ENCODE measurements at regions of chr17 and their contacts with region 1.

Region 1: GRCh38 chr17:9021158-9021991 is at the start of gene NTN1:
- DNase-seq: peak; percentile 73
- ATAC-seq: peak; percentile 76 to 83
- total RNA-seq, gene NTN1: 99.9 to 167 TPM

Region 2: DNA sequence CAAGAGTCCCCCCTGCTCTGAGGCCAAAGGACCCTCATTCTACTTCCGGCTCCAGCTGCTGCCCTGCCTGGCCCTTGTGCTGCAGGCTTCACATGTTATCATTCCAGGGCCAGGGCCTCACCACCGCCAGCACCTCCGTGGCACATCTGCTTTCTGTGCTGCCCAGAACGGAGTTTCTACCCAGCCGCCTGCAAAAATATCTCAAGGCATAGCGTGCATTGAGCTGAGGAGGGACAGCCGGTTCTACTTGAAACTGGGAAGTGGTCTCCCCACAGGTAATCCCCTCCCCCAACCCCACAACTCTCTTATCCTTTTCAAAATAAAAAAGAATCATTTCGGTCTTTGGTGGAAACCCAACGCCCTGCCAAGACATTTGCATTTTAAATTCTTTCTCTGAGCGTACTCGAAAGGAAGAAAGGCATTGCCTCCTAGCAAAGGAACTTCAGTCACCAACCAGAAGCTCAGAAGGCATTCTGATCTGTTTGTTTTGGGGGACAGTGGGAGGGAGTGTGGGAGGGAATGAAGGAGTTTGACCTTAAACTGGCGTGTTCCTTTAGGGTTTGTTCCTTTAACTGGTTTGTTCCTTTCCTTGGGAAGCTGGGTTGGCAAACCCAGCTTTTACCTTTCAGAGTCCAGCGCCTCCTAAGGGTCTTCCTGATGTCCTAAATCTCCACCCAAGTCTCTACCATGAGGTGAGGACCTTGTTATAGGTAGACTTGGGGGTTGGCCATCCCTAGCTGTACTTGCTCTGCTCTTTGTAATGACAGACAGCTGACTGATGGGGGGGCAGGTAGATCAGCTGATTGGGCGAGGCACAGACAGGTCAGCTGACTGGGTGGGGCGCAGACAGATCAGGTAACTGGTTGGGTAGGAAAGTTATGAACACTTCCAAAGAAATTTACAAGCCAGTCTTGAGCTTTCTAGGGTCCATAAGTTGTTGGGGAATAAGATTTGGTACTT is 120.5 kb before region 1 on chr17:
- intact Hi-C with region 1: no loop called
- DNase-seq: no peak
- ATAC-seq: no peak

Region 3: DNA sequence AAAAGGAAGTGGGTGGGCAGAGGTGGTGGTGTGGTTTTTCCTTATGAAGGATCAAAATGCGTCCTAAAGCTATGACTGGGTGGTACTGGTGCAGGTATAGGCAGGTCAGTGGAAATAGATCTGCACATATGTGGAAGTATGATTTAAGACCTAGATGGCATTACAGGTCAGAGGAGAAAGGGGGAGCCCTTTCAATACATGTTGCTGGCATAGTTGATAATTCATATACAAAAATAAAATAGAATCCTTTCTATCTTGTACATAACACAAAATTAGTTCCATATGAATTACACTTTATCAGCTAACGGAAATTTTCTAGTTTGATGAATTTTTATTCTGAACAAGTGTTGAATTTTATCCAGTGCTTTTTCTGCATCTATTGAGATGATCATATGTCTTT is 35.1 kb before region 1 on chr17:
- intact Hi-C with region 1: no loop called
- DNase-seq: no peak
- ATAC-seq: no peak

Region 4: DNA sequence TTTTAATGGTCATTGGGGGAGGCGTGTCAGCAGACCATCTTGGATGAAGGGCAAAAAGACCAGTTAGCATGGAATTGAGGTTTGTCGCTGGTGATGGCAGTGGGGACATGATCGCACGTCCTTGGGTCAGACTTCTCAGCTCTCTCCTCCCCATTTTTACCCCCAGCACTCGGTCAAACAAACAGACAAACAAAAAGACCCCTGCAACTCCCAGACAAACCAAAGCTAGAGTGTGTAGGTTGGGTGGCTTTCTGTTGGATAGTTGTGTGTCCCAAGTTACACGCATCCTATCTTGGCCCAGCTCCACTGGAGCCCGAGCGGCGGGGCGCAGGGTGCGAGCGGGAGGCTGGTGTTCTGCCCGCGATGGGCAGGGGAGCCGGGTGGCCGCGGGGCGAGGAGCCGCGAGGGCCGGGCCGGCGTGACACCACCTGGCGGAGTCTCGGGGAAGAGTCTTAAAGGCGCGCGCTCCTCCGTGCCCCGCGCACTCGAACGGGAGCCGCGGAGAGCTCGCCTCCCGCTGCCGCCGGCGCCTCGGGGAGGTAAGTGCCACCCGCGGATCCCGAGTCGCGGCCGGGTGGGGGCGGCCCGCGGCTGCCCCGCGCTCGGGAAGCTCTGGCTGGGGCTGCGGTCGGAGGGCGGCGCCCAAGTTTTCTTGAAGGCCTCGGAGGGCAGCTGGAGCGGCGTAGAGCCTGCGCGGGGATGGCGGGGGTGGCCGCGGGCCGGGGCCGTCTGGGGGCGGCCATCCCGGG is 18.6 kb before region 1 on chr17:
- intact Hi-C with region 1: loop called in 1 of 2 experiments (anchors 2 kb)
- DNase-seq: peak; percentile 56
- ATAC-seq: peak; percentile 67 to 78

Region 5: GRCh38 chr17:9104370-9105041 is 83.1 kb after region 1 on chr17:
- intact Hi-C with region 1: loop called in 1 of 2 experiments (anchors 10 kb)
- DNase-seq: peak; percentile 86
- ATAC-seq: peak; percentile 95 to 96

Region 6: DNA sequence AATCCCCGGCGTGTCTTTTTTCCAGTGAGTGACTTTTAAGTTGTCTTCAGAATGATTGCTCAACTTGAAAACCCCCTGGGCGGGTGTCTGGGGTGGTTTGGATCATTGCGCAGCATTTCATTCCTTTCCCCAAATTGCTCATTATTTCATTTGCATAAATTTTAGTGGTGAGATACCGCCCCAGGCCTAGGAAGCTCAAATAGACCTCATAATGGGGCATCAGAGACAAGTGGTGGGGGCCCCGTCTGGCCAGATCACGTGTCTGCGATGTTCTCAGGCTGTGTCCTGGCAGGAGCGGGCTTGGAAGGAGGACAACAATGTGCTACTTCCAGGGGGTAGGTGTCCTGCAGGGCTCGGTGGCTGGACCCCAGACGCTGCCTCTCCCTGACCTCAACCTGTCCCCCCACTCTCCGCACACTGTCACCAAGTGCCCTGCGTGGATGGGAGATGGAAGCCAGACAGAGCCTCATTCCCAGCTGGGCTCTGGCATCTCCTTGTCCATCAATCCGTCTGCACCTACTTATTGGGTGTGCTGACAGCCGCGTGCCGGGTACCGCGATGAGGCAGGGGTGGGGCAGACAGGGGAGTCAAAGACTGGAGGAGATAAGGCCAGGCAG is 116.8 kb after region 1 on chr17:
- intact Hi-C with region 1: loop called in 1 of 2 experiments (anchors 5 kb)
- DNase-seq: peak; percentile 66
- ATAC-seq: peak; percentile 84 to 88